GM10248 (cell line): ENCODE measurements at regions of chr13 and their contacts with region 1.

Region 1: DNA sequence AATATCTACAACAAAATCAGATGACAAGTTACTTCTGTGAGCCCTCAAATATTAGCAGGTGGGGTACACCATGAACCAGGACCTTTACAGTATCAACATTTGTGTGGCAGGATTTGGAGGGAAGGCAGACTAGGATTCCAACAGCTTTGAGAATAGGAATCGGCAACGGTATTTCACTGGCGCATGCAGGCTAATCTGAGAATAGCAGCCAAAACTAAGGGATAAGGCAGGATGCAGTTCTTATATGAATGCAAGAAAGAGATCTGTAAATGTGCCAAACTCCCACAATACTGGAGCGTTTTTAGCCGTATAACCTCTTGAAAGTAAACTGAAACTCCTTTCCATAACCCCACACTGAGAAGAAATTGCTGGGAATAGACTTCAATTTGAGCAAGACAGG is 81.5 kb downstream of the RNF17 start:
- DNase-seq: no peak
- CTCF ChIP-seq: no peak

Region 2: GRCh38 chr13:24834902-24835510 is 10.5 kb before region 1 on chr13:
- CTCF ChIA-PET with region 1: interaction called, 12 read pairs
- POLR2A ChIA-PET with region 1: no interaction called
- DNase-seq: no peak
- CTCF ChIP-seq: no peak